Caco-2 (cell line): ENCODE measurements at regions of chr12 and their contacts with region 1.

Region 1: DNA sequence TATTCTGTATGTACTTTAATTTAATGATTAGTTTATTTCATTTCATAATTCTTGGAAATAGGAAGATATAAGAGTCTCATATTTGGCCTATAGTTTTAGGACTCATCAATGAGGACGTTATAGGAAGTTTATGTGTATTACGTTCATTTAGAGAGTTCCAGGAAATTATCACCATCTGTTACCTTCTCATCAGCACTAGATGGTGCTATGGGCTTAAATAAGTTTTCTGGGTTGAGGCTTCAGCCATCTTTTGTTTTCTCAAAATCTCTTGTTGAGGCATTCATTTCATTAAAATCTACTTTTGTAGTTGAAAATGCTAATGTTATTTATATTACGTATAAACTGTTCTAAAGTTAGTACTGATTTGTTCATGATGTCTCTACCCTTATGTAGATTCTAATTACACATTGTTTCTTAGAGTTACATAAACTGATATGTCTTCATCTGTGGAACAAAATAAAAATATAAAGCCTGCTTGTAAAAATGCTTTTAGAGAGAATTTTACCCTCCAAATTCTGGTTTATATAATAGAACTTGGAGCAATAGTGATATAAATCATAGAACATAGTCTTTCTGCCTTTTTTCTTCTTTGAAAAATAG is 89.2 kb downstream of the CFAP54 start:
- DNase-seq: peak in 1 of 2 experiments; percentile 33
- H3K4me3 ChIP-seq: no peak overlapping the region
- H3K4me3 Mint-ChIP-seq: no peak overlapping the region
- H3K27ac Mint-ChIP-seq: no peak overlapping the region
- H3K4me1 ChIP-seq: no peaks in the 10 kb centered on the region
- H3K4me1 Mint-ChIP-seq: no peaks in the 10 kb centered on the region
- H3K27me3 ChIP-seq: no peaks in the 10 kb centered on the region
- H3K27me3 Mint-ChIP-seq: peaks cover 3% of the 10 kb centered on the region
- CTCF ChIP-seq: peak; percentile 45 to 54

Region 2: DNA sequence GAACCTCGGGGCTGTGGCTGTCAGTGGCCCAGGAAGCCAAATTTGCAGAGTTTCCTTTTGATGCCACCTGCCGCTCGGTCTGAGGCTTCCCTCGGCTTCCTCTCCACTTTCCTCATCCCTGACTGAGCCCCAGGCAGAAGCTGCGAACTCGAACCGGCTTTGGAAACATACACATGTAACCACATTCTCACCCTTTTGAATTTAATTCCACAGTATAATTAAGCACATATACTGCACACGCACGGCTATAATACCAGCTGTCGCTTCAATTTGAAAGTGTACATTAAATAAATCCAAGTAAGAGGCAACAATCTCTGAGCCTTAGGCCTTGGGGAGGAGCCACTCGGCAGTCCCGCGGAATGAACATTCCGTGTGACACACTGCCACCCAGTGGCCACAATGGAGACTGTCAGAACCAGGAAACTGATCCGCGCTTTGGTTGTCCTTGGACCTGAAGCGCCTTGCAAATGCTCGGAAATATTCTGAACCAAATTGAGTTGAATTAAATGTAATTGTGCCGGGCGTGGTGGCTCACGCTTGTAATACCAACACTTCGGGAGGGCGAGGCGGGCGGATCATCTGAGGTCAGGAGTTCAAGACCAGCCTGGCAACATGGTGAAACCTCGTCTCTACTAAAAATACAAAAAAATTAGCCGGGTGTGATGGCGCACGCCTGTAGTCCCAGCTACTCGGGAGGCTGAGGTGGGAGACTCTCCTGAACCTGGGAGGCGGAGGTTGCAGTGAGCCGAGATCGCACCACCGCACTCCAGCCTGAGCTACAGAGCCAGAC is 1818.9 kb after region 1 on chr12:
- CTCF ChIA-PET with region 1: no interaction called
- POLR2A ChIA-PET with region 1: no interaction called
- intact Hi-C with region 1: loop called (anchors 5 kb)
- DNase-seq: peak; percentile 70 to 79
- H3K4me3 ChIP-seq: no peak overlapping the region
- H3K4me3 Mint-ChIP-seq: peak overlapping the region; percentile 66
- H3K27ac Mint-ChIP-seq: peak overlapping the region; percentile 65
- H3K4me1 ChIP-seq: peaks cover 36% of the 10 kb centered on the region
- H3K4me1 Mint-ChIP-seq: peaks cover 16% of the 10 kb centered on the region
- H3K27me3 ChIP-seq: no peaks in the 10 kb centered on the region
- H3K27me3 Mint-ChIP-seq: no peaks in the 10 kb centered on the region
- CTCF ChIP-seq: peak; percentile 74 to 82